ENCODE measurements at regions of chr1 and their contacts with region 1.

Region 1: GRCh38 chr1:171801487-171801891 is 20.0 kb downstream of the METTL13 start:
- DNase-seq: no peak
- ATAC-seq: peak; percentile 50 to 65
- H3K4me3 ChIP-seq: no peak overlapping the region
- H3K27ac ChIP-seq: no peak overlapping the region
- H3K4me1 ChIP-seq: peaks cover 3% of the 10 kb centered on the region
- H3K27me3 ChIP-seq: no peaks in the 10 kb centered on the region
- CTCF ChIP-seq: peak; percentile 75

Region 2: DNA sequence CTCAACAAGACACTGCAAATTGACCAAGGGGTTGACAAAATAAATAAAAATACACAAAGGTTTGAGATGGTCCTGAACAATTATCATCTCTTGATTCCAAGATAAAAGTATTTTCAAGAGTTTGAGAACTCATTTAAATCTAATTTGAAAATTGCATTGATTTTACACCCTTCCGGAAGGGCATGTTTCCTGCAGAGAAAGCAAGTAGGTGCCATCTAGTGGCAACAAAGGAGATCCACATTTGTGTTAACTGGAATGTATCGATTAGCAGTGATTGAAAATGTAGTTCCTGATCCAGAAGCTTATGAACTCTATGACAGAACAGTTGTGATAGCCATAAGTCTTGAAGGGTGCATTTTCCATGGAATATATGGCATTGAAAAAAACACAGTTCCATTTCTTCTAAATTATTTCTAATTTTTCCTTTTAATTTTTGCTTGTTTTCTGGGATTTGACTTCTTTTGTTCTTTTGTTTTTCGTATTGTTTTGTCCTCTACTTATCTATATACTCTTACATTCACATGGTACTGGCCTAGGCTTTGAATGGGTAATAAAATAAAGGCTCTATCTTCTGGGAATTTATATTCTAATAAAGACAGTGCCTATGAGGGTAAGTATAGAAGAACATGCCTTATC is 183.5 kb after region 1 on chr1:
- intact Hi-C with region 1: loop called (anchors 5 kb)
- DNase-seq: no peak
- ATAC-seq: peak in 1 of 2 donors; percentile 71
- H3K4me3 ChIP-seq: no peak overlapping the region
- H3K27ac ChIP-seq: no peak overlapping the region
- H3K4me1 ChIP-seq: no peaks in the 10 kb centered on the region
- H3K27me3 ChIP-seq: no peaks in the 10 kb centered on the region
- CTCF ChIP-seq: peak; percentile 76

Measured in lower lobe of right lung (tissue), 2 donors.